AG04450 (cell line): ENCODE measurements at regions of chr5 and their contacts with region 1.

Region 1: GRCh38 chr5:153964880-153965645 is 73.6 kb downstream of the FAM114A2 start:
- DNase-seq: peak; percentile 21
- H3K4me3 ChIP-seq: no peak overlapping the region; the same call in 1 of the 2 replicates
- H3K27ac ChIP-seq: no peak overlapping the region
- H3K27me3 ChIP-seq: peaks cover 6% of the 10 kb centered on the region
- CTCF ChIP-seq: peak; percentile 93

Region 2: GRCh38 chr5:152532714-152533113 is 1432.3 kb before region 1 on chr5:
- CTCF ChIA-PET with region 1: interaction called, 129 read pairs
- POLR2A ChIA-PET with region 1: no interaction called
- DNase-seq: no peak
- H3K4me3 ChIP-seq: no peak overlapping the region
- H3K27ac ChIP-seq: no peak overlapping the region
- H3K27me3 ChIP-seq: no peaks in the 10 kb centered on the region
- CTCF ChIP-seq: peak; percentile 51

Region 3: DNA sequence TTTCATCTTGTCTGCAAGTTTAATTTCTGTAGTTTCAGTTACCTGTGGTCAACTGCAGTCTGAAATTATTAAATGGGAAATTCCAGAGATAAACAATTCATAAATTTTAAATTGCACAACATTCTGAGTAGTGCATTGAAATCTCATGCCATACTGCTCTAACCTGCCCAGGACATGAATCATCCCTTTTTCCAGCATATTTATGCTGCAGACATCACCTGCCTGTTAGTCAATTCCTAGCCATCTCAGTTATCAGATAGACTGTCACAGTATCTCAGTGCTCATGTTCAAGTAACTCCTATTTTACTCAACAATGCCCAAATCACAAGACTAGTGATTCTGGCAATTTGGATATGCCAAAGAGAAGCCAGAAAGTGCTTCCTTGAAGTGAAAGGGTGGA is 697.6 kb before region 1 on chr5:
- CTCF ChIA-PET with region 1: no interaction called
- POLR2A ChIA-PET with region 1: no interaction called
- DNase-seq: no peak
- H3K4me3 ChIP-seq: no peak overlapping the region
- H3K27ac ChIP-seq: no peak overlapping the region
- H3K27me3 ChIP-seq: no peaks in the 10 kb centered on the region
- CTCF ChIP-seq: no peak

Region 4: GRCh38 chr5:153496835-153497234 is 468.2 kb before region 1 on chr5:
- CTCF ChIA-PET with region 1: interaction called, 62 read pairs
- POLR2A ChIA-PET with region 1: no interaction called
- DNase-seq: no peak
- H3K4me3 ChIP-seq: no peak overlapping the region
- H3K27ac ChIP-seq: no peak overlapping the region
- H3K27me3 ChIP-seq: no peaks in the 10 kb centered on the region
- CTCF ChIP-seq: peak; percentile 95

Region 5: DNA sequence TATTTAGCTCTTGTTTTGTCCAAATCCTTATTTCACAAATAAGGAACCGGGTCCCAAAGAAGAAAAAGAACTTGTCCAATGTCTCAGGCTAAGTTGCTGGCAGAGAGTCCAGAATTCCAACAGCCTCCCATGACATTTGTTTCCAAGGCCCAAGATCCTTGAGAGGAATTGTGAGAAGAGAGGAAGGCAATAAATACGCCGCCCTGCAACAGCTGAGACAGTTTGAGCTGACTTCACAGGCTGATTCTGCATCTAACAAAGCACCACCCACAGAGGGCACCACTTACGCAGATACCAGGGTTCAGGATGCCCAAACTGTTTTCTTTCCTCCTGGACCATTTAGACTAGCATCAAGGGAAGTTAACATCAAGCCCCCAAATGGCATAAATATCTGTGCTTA is 137.7 kb before region 1 on chr5:
- CTCF ChIA-PET with region 1: interaction called, 15 read pairs
- POLR2A ChIA-PET with region 1: no interaction called
- DNase-seq: no peak
- H3K4me3 ChIP-seq: no peak overlapping the region
- H3K27ac ChIP-seq: no peak overlapping the region
- H3K27me3 ChIP-seq: no peaks in the 10 kb centered on the region
- CTCF ChIP-seq: peak; percentile 19; the same call in 1 of the 2 replicates

Region 6: GRCh38 chr5:153952893-153953292 is 12.2 kb before region 1 on chr5:
- CTCF ChIA-PET with region 1: interaction called, 14 read pairs
- POLR2A ChIA-PET with region 1: no interaction called
- DNase-seq: no peak
- H3K4me3 ChIP-seq: no peak overlapping the region
- H3K27ac ChIP-seq: no peak overlapping the region
- H3K27me3 ChIP-seq: no peaks in the 10 kb centered on the region
- CTCF ChIP-seq: no peak